ENCODE measurements at regions of chr2 and their contacts with region 1.

Region 1: GRCh38 chr2:10408649-10409579 is 39.2 kb downstream of the ODC1 start:
- DNase-seq: peak; percentile 92
- ATAC-seq: peak; percentile 39
- H3K4me3 ChIP-seq: no peak overlapping the region
- H3K27ac ChIP-seq: peak overlapping the region; percentile 99
- H3K4me1 ChIP-seq: peaks cover 70% of the 10 kb centered on the region
- H3K27me3 ChIP-seq: no peaks in the 10 kb centered on the region
- CTCF ChIP-seq: peak; percentile 97

Region 2: GRCh38 chr2:10122386-10123280 is 286.3 kb before region 1 on chr2 and contains the start of gene RRM2:
- CTCF ChIA-PET with region 1: interaction called, 14 read pairs
- POLR2A ChIA-PET with region 1: no interaction called
- intact Hi-C with region 1: loop called (anchors 1 kb)
- DNase-seq: peak; percentile 96
- ATAC-seq: peak; percentile 72
- H3K4me3 ChIP-seq: peak within 1 kb of the TSS; percentile 86
- H3K27ac ChIP-seq: peak within 1 kb of the TSS; percentile 95
- H3K4me1 ChIP-seq: peaks cover 42% of the 10 kb centered on the region
- H3K27me3 ChIP-seq: no peaks in the 10 kb centered on the region
- CTCF ChIP-seq: no peak
- total RNA-seq, gene RRM2: 229 and 282 TPM in 2 replicates

Region 3: GRCh38 chr2:10269711-10270610 is 139.0 kb before region 1 on chr2:
- CTCF ChIA-PET with region 1: interaction called, 5 read pairs
- POLR2A ChIA-PET with region 1: no interaction called
- intact Hi-C with region 1: loop called (anchors 1 kb)
- DNase-seq: no peak
- ATAC-seq: peak; percentile 12; the same call in 1 of the 2 replicates
- H3K4me3 ChIP-seq: no peak overlapping the region
- H3K27ac ChIP-seq: no peak overlapping the region
- H3K4me1 ChIP-seq: peaks cover 31% of the 10 kb centered on the region
- H3K27me3 ChIP-seq: no peaks in the 10 kb centered on the region
- CTCF ChIP-seq: no peak

Region 4: DNA sequence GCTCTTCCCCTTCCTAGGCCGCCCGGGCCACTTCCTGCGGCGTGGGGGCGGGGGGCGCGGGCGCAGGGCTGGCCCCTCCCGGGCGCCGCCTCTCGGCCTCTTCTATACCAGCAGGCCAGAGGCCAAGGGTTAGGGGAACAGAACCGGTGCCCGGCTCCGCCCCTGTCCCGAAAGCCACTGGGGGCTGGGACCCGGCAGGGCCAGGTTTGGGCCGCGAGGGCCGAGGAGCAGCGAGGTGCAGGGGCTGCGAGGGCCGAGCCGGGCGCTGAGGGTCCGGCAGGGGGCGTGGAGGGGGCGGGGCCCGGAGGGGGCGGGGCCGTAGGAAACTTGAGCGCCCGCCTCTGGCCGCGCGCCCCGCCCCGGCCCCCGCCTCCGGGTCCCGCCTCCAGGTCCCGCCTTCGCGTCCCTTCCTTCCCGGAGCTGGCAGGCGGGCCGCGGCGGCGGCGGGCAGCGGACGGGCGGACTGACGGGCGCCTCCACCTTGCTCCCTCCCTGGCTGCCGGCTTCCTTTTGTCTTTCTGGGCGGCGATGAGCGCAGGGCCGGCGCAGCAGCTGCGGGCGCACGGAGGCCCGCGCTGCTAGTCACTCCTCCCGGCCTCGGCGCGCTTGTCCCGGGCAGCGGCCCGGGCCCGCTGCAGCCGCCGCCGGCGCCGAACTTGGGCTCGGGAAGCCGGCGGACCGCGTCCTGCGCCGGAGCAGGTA is 106.3 kb before region 1 on chr2 and contains the start of gene HPCAL1:
- CTCF ChIA-PET with region 1: interaction called, 4 read pairs
- POLR2A ChIA-PET with region 1: interaction called, 6 read pairs
- intact Hi-C with region 1: loop called (anchors 1 kb)
- DNase-seq: peak; percentile 84
- ATAC-seq: peak; percentile 61
- H3K4me3 ChIP-seq: peak within 1 kb of the TSS; percentile 99
- H3K27ac ChIP-seq: peak within 1 kb of the TSS; percentile 68
- H3K4me1 ChIP-seq: peaks cover 65% of the 10 kb centered on the region
- H3K27me3 ChIP-seq: no peaks in the 10 kb centered on the region
- CTCF ChIP-seq: peak; percentile 54
- total RNA-seq, gene HPCAL1: 312 and 339 TPM in 2 replicates

Region 5: DNA sequence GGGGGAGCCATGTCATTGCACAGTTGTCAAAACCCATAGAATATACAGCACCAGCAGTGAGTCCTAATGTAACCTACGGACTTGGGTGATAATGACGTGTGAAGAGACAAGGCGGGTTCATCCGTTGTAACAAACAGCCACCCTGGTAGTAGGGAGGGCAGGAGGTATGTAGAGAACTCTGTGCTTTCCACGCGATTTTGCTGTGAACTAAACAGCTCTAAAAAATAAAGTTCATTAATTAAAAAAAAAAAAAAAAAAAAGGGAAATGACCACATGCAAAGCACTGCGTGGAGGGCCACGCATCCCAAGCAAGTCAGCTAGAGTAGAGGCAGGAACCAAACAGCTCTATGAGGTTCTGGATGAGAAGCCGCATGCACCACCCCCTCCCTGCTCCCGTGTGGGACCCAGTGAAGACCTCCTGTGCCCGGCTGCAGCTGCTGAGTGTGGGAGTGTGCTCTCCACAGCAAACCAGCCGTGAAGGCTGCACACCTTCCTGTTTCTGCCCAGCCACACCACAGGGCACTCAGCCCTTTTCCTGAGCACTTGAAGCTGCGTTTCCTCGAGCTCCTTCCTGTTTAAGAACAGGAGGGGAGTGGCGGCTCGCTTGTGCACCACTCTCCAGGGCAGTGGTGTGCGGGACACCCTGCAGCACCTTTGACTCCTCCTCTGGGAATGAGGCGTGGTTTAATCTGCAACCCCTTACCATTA is 26.4 kb before region 1 on chr2:
- CTCF ChIA-PET with region 1: interaction called, 13 read pairs
- POLR2A ChIA-PET with region 1: no interaction called
- intact Hi-C with region 1: loop called (anchors 1 kb)
- DNase-seq: no peak
- ATAC-seq: no peak
- H3K4me3 ChIP-seq: no peak overlapping the region
- H3K27ac ChIP-seq: no peak overlapping the region
- H3K4me1 ChIP-seq: peaks cover 54% of the 10 kb centered on the region
- H3K27me3 ChIP-seq: no peaks in the 10 kb centered on the region
- CTCF ChIP-seq: no peak

Region 6: GRCh38 chr2:11187083-11187619 is 778.2 kb after region 1 on chr2:
- CTCF ChIA-PET with region 1: no interaction called
- POLR2A ChIA-PET with region 1: no interaction called
- intact Hi-C with region 1: no loop called
- DNase-seq: peak; percentile 52
- ATAC-seq: peak; percentile 57
- H3K4me3 ChIP-seq: no peak overlapping the region
- H3K27ac ChIP-seq: no peak overlapping the region
- H3K4me1 ChIP-seq: peaks cover 7% of the 10 kb centered on the region; the same call in 1 of the 2 replicates
- H3K27me3 ChIP-seq: no peaks in the 10 kb centered on the region
- CTCF ChIP-seq: no peak

Measured in PC-3 (cell line).